Dorsolateral prefrontal cortex (tissue), 120 donors: ENCODE measurements at regions of chr14 and their contacts with region 1.

Region 1: GRCh38 chr14:78029601-78030372 is 140.4 kb upstream of the NRXN3 start:
- DNase-seq: peak in 4 of 10 donors; percentile 8 to 52 (median 44)
- H3K4me3 ChIP-seq: no peak overlapping the region
- H3K27ac ChIP-seq: peak overlapping the region in 1 of 59 donors; percentile 18
- H3K27me3 ChIP-seq: peaks cover 0 to 2% (median 0%) of the 10 kb centered on the region in 45 donors
- CTCF ChIP-seq: peak in 42 of 56 donors; percentile 12 to 65 (median 38)

Region 2: DNA sequence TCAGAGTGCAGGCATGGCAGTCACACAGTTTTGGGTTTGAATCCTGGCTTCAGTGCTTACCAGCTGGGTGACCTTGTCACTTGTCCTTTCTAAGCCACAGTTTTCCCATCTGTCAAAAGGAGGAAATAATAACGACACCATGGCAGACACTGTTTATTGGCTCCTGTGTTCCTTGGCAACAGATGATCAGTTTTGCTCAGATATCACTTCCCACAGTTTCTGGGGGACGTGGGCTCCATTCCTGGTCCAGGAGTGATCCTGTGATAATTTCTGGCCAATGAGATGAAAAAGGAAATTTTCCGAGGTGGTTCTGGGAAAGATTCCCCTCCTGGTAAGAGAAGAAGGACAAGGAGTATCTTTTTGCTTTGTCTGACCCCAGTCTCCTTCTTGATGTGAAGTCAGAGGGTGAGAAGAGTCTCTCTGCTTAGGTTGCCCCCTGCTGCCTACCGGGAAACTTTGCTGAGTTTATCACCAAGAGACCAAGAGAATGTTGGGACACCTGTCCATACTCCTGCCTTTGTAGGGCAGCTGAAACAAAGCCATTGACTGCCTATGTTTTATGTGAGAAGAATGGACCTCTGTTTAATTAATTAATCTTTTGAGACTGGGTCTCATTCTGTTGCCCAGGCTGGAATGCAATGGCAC is 38.5 kb before region 1 on chr14:
- intact Hi-C with region 1: loop called in 1 of 2 experiments (anchors 5 kb)
- DNase-seq: no peak
- H3K4me3 ChIP-seq: no peak overlapping the region
- H3K27ac ChIP-seq: peak overlapping the region; percentile 72 to 99 (median 94)
- H3K27me3 ChIP-seq: no peaks in the 10 kb centered on the region
- CTCF ChIP-seq: peak in 39 of 56 donors; percentile 14 to 70 (median 36)